ENCODE measurements at regions of chr4 and their contacts with region 1.

Region 1: DNA sequence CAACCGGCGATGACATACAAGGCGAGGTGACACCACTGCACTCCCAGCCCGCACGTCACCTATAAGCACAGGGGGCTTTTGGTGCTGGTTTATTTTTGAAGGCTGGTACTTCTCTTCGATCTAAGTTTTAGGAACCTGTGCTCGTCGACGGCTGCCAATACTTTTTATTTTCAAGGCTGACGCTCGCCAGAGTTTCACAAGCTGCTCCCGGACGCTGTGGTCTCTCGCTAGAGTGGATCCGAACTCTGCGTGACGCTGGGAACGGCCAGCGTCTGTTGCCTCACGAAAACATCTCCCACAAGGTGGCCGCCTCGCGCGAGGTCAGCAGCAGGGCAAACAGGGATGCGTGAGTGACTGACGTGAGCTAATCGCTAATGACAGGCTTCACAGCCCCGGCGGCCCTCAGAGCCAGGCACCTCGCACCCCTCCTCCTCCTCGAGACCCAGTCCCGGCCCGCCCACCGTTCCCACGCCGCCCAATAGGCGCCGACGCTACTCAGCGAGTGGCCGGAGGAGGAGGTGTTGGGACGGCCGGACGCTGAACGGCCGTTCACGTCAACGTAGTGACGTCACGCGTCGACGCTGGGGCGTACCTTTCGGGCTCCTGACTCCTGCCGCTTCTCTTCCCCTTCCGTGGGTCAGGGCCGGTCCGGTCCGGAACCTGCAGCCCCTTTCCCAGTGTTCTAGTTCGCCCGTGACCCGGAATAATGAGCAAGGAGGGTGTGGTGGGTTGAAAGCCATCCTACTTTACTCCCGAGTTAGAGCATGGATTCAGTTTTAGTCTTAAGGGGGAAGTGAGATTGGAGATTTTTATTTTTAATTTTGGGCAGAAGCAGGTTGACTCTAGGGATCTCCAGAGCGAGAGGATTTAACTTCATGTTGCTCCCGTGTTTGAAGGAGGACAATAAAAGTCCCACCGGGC is at the start of gene CLCN3:
- DNase-seq: peak; percentile 94
- ATAC-seq: peak; percentile 84
- H3K4me3 Mint-ChIP-seq: peak within 1 kb of the TSS; percentile 99
- H3K27ac Mint-ChIP-seq: peak within 1 kb of the TSS; percentile 100
- H3K4me1 Mint-ChIP-seq: peaks cover 56% of the 10 kb centered on the region
- H3K27me3 Mint-ChIP-seq: no peaks in the 10 kb centered on the region
- CTCF ChIP-seq: no peak
- total RNA-seq, gene CLCN3: 18.5 to 21.6 TPM

Region 2: DNA sequence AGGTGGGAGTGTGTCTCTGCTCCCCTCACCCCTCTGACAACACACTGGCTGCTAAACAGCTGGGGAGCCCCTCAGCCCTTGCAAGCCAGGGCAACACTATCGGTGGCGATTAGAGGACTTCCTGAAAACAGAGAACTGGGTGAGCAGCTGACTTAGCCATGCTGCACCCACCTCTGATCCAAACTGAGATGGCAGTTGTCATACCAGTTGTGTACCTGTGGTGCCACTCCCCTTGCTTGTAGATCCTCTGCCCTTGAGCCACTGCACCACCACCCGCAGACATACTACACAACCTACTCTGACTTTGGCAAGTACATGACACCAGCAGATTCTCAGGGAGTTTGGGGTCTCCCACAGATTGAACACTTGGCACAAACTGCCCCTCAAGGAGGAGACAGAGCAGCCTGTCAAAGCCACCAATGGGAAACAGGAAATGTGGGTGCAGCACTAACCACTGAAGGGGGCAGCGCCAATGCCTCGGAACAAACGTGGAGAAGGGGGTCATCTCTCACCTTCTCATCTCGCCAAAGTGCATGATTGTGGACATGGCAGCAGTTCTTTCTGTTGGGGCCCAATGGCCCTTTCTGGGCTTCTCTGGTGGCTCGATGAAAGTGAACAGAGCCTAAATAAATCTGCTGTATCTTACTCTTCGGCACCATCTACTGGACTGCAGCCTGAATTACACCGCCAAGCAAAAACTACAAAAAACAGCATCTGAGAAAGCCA is 127.6 kb before region 1 on chr4:
- CTCF ChIA-PET with region 1: no interaction called
- POLR2A ChIA-PET with region 1: no interaction called
- intact Hi-C with region 1: no loop called
- DNase-seq: peak; percentile 43
- ATAC-seq: peak; percentile 74
- H3K4me3 Mint-ChIP-seq: no peak overlapping the region
- H3K27ac Mint-ChIP-seq: no peak overlapping the region
- H3K4me1 Mint-ChIP-seq: peaks cover 3% of the 10 kb centered on the region
- H3K27me3 Mint-ChIP-seq: no peaks in the 10 kb centered on the region
- CTCF ChIP-seq: peak; percentile 68

Region 3: GRCh38 chr4:169604131-169604900 is 15.9 kb before region 1 on chr4:
- CTCF ChIA-PET with region 1: interaction called, 11 read pairs
- POLR2A ChIA-PET with region 1: interaction called, 6 read pairs
- intact Hi-C with region 1: no loop called
- DNase-seq: peak; percentile 62
- ATAC-seq: peak; percentile 94
- H3K4me3 Mint-ChIP-seq: no peak overlapping the region
- H3K27ac Mint-ChIP-seq: peak overlapping the region; percentile 3
- H3K4me1 Mint-ChIP-seq: peaks cover 37% of the 10 kb centered on the region
- H3K27me3 Mint-ChIP-seq: no peaks in the 10 kb centered on the region
- CTCF ChIP-seq: no peak

Region 4: GRCh38 chr4:169659716-169660670 is 39.8 kb after region 1 on chr4:
- CTCF ChIA-PET with region 1: interaction called, 31 read pairs
- POLR2A ChIA-PET with region 1: interaction called, 15 read pairs
- intact Hi-C with region 1: loop called (anchors 1 kb)
- DNase-seq: peak; percentile 84
- ATAC-seq: peak; percentile 98
- H3K4me3 Mint-ChIP-seq: peak overlapping the region; percentile 84
- H3K27ac Mint-ChIP-seq: peak overlapping the region; percentile 99
- H3K4me1 Mint-ChIP-seq: peaks cover 23% of the 10 kb centered on the region
- H3K27me3 Mint-ChIP-seq: no peaks in the 10 kb centered on the region
- CTCF ChIP-seq: no peak

Region 5: GRCh38 chr4:169757575-169758184 is 137.5 kb after region 1 on chr4 and contains the start of gene HPF1:
- CTCF ChIA-PET with region 1: no interaction called
- POLR2A ChIA-PET with region 1: no interaction called
- intact Hi-C with region 1: loop called (anchors 5 kb)
- DNase-seq: peak; percentile 96
- ATAC-seq: peak; percentile 95
- H3K4me3 Mint-ChIP-seq: peak within 1 kb of the TSS; percentile 97
- H3K27ac Mint-ChIP-seq: peak within 1 kb of the TSS; percentile 77
- H3K4me1 Mint-ChIP-seq: peaks cover 17% of the 10 kb centered on the region
- H3K27me3 Mint-ChIP-seq: no peaks in the 10 kb centered on the region
- CTCF ChIP-seq: no peak
- total RNA-seq, gene HPF1: 20.4 to 28.2 TPM

Region 6: DNA sequence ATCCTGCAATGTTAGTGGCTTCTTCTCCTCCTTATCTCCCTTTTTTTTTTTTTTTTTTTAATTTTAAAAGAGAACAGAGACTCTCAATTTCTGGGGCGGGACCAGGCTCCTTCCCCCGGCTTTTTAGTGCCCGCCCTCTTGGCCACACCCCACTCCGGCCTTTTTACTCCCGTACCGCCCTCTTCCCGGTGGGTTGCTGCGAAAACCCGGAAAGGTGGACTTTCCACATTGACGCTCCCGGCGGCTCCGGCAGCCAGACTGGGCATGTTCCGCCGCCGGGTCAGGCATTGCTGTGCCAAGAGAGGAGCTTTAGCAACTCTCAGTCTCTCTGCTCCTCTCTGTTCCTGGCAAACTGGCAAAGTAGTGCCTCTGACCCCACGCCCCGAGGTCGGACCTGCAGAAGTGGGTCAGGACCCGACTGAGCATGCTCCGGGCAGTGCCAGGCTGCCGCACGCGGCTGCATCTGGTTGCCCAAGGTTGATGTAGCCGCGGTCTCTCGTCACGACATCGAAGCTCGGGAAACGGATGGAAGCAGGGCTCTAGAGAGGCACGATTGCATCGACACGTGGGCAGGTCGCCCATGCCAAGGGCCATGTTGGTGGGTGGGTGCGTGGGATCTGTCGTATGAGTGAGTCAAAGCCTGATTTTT is 407.1 kb after region 1 on chr4:
- CTCF ChIA-PET with region 1: no interaction called
- POLR2A ChIA-PET with region 1: no interaction called
- intact Hi-C with region 1: loop called (anchors 10 kb)
- DNase-seq: peak; percentile 94
- ATAC-seq: peak; percentile 85
- H3K4me3 Mint-ChIP-seq: peak overlapping the region; percentile 81
- H3K27ac Mint-ChIP-seq: peak overlapping the region; percentile 76
- H3K4me1 Mint-ChIP-seq: peaks cover 3% of the 10 kb centered on the region
- H3K27me3 Mint-ChIP-seq: peaks cover 19% of the 10 kb centered on the region
- CTCF ChIP-seq: no peak

Measured in activated CD8-positive, alpha-beta T cell treated with anti-CD3 and anti-CD28 coated beads for 36 hours (primary cell).